GM23248 (cell line): ENCODE measurements at regions of chr6 and their contacts with region 1.

Region 1: DNA sequence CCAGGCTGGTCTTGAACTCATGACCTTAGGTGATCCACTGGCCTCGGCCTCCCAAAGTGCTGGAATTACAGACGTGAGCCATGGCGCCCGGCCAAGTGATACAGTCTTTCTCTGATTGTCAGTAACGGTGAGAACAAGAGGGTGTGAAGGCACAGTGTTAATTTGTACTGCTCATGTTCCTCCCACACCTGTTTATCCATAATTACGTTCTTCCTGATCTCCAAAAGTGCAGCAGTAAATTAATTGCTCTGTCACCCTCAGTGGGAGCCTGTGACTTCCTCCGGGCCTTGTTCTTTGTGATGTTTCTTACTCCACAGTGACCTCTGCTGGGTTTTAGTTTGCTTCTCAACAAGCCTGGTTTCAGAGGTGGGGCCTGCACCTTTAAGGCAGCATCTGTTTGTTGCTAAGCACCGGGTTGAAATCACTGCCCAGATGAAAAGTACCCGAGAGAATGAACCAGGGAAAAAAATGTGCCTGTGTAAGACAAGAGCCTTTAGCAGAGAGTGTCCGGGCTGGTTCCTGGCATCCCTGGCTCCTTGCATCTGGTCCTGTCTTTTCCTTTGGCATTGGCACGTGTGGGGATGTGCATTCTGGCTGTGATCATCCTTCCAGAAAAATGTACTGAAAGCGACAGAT is 89.1 kb upstream of the CLDN20 start:
- DNase-seq: peak; percentile 90
- H3K4me3 ChIP-seq: no peak overlapping the region
- H3K27ac ChIP-seq: no peak overlapping the region
- H3K4me1 ChIP-seq: peaks cover 19% of the 10 kb centered on the region
- H3K27me3 ChIP-seq: no peaks in the 10 kb centered on the region

Region 2: GRCh38 chr6:154928325-154928922 is 246.3 kb before region 1 on chr6:
- in situ Hi-C with region 1: loop called (anchors 5 kb)
- DNase-seq: peak; percentile 83
- H3K4me3 ChIP-seq: no peak overlapping the region
- H3K27ac ChIP-seq: no peak overlapping the region
- H3K4me1 ChIP-seq: peaks cover 22% of the 10 kb centered on the region
- H3K27me3 ChIP-seq: no peaks in the 10 kb centered on the region

Region 3: DNA sequence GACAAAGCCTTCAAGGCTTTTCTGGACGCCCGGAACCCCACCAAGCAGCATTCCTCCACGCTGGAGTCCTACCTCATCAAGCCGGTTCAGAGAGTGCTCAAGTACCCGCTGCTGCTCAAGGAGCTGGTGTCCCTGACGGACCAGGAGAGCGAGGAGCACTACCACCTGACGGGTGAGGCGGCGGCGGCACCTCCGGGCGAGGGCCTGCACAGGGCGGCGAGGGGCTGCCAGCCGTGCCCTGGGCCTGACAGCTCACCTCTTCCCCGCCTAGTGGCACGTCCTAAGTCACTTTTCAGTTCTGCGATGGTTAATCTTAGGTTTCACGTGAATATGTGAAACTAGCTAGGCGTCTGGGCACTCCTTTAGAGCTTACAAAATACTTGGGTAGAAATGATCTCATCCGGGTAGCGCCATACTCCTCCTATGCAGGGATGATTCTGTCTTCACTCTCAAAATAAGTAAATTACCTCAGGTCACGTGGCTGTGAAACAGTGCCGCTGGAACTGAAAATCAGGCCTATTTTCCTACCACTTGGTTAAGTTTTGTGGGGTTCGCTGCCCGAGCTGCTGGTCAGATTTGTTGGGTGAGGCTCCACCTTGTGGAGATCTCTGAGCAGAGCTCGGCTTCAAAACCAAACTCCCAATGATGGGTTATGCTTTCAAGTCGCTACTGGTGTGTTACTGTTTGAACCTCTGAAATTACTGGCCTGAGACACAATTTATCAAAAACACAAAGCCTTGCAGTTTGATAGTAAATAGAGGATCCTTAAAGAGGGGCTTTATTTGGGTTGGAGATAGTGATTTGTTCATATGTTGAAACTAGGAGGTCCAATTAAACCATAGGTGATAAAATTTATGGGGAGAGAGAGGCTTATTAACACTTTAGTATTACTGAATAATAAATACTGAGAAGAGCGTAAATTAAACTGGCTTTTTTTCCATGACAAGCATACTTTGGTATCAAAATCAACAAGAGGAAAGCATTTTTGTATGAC is 73.6 kb after region 1 on chr6:
- in situ Hi-C with region 1: loop called (anchors 5 kb)
- DNase-seq: peak; percentile 78
- H3K4me3 ChIP-seq: no peak overlapping the region
- H3K27ac ChIP-seq: no peak overlapping the region
- H3K4me1 ChIP-seq: no peaks in the 10 kb centered on the region
- H3K27me3 ChIP-seq: no peaks in the 10 kb centered on the region

Region 4: GRCh38 chr6:155623450-155624178 is 448.9 kb after region 1 on chr6:
- in situ Hi-C with region 1: no loop called
- DNase-seq: no peak
- H3K4me3 ChIP-seq: no peak overlapping the region
- H3K27ac ChIP-seq: no peak overlapping the region
- H3K4me1 ChIP-seq: no peaks in the 10 kb centered on the region
- H3K27me3 ChIP-seq: no peaks in the 10 kb centered on the region

Region 5: GRCh38 chr6:156028335-156029131 is 853.8 kb after region 1 on chr6:
- in situ Hi-C with region 1: no loop called
- DNase-seq: no peak
- H3K4me3 ChIP-seq: no peak overlapping the region
- H3K27ac ChIP-seq: no peak overlapping the region
- H3K4me1 ChIP-seq: no peaks in the 10 kb centered on the region
- H3K27me3 ChIP-seq: no peaks in the 10 kb centered on the region